Gastrocnemius medialis (tissue), 4 donors: ENCODE measurements at regions of chr4 and their contacts with region 1.

Region 1: DNA sequence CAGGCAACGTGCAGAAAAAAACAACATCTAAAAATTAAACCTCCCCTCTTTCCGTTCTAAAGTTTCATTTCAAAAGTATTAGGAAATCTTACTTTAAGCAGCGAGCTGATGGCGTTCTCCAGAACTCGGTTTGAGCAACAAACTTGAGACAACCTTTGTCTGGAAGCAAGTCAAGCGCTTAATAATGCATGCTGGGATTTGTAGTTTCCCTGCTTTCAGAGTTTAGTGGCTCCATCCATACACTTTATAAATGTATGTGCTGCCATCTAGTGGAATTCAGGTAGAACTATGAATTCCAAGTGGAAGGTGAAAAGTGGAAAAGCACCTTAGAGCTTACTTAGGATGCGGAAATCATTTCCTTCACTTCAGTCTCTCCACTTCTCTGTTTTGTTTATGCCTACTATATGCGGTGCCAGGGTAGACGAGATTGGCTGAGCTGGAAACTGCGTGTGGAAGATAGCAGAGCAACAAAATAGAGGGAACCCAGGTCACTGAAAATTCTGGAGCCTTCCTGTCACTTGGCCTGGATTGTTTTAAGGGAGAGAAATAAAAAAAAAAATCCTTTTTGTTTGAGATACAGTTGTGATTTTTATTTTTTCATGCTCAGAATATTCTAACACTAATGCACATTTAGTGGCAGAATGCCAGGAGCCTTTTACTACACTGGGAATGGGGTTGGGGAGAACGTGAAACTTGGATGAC is at the start of gene BDH2:
- DNase-seq: peak; percentile 54 to 66
- ATAC-seq: peak; percentile 100
- H3K4me3 ChIP-seq: peak within 1 kb of the TSS; percentile 55 to 62 (median 58)
- H3K27ac ChIP-seq: peak within 1 kb of the TSS; percentile 66 to 77 (median 73)
- H3K4me1 ChIP-seq: peaks cover 14 to 19% of the 10 kb centered on the region in 2 donors
- H3K27me3 ChIP-seq: no peaks in the 10 kb centered on the region
- CTCF ChIP-seq: peak; percentile 75 to 82 (median 79)
- POLR2A ChIP-seq: peak in 1 of 2 donors; percentile 28
- total RNA-seq, gene BDH2: 11.6 to 40.3 (median 18.5) TPM

Region 2: GRCh38 chr4:102324730-102325129 is 775.1 kb before region 1 on chr4:
- in situ Hi-C with region 1: no loop called
- intact Hi-C with region 1: no loop called
- DNase-seq: no peak
- ATAC-seq: no peak
- H3K4me3 ChIP-seq: no peak overlapping the region
- H3K27ac ChIP-seq: no peak overlapping the region
- H3K4me1 ChIP-seq: no peaks in the 10 kb centered on the region
- H3K27me3 ChIP-seq: no peaks in the 10 kb centered on the region
- CTCF ChIP-seq: no peak
- POLR2A ChIP-seq: no peak

Region 3: DNA sequence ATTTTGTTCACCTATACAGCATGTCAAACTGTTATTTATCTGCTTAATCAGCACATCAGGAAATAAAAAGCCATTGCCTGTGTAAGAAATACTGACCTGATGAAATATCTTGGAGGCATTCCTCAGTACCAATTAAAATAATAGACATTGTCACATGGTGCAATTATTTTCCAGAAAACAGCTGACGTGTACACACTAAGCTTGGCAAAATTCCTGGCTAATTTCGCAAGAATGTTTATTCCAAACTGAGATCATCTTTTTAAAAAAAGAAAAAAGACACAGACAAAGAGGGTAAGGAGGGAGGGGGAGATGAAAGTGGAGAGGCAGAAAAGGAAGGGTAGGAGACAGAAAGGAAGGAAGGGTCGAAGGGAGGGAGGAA is 660.6 kb before region 1 on chr4:
- in situ Hi-C with region 1: loop called in 2 of 4 experiments (anchors 10 kb)
- intact Hi-C with region 1: no loop called
- DNase-seq: peak in 1 of 2 donors; percentile 23
- ATAC-seq: peak; percentile 89 to 97
- H3K4me3 ChIP-seq: peak overlapping the region in 1 of 4 donors; percentile 18
- H3K27ac ChIP-seq: peak overlapping the region; percentile 58 to 70 (median 66)
- H3K4me1 ChIP-seq: peaks cover 15 to 18% of the 10 kb centered on the region in 2 donors
- H3K27me3 ChIP-seq: no peaks in the 10 kb centered on the region
- CTCF ChIP-seq: no peak
- POLR2A ChIP-seq: no peak

Region 4: GRCh38 chr4:102500696-102501446 is 599.0 kb before region 1 on chr4 and contains the start of gene NFKB1:
- in situ Hi-C with region 1: no loop called
- intact Hi-C with region 1: loop called (anchors 5 kb)
- DNase-seq: peak; percentile 37 to 66
- ATAC-seq: peak; percentile 56 to 66
- H3K4me3 ChIP-seq: peak within 1 kb of the TSS; percentile 71 to 98 (median 88)
- H3K27ac ChIP-seq: peak within 1 kb of the TSS; percentile 97 to 99 (median 98)
- H3K4me1 ChIP-seq: peaks cover 37 to 43% of the 10 kb centered on the region in 2 donors
- H3K27me3 ChIP-seq: no peaks in the 10 kb centered on the region
- CTCF ChIP-seq: no peak
- POLR2A ChIP-seq: peak in 1 of 2 donors; percentile 50
- total RNA-seq, gene NFKB1: 20.0 to 27.2 (median 22.7) TPM

Region 5: DNA sequence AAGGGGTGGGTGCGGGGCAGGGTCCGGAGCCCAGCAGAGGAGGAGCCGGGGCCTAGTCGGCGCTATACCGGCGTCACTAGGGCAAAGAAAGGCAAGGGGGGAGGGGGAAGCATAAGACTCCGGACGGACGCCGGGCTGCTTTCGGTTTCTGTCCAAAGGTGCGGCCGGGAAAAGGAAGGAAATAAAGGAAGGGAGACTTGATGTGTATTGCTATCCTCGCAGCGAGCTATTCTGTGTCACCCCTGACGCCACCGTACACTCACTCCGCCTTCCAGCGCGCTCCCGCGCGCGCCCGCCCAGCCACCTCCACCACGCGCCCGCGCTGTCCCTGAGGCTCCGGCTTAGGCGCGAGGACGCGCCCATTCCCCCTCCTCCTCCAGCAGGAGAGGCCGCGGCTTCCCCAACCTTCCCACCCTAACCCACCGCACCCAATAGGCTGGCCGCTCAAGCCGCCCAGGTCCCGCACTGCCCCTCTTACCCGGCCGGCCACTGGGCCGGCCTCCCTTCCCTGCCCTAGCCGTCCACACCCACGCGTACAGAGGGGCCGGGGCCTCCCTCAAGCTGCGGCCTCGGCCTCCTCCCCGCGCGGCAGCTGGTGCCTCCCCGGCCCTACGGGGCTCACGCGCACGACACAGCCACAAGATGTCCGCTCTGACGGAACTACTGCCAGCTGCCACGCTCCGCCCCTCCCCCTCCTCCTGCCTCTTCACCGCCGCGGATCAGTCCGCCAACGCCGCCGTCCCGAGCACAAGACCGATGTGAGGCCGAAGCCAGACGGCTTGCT is 272.8 kb before region 1 on chr4 and contains the start of gene UBE2D3:
- in situ Hi-C with region 1: no loop called
- intact Hi-C with region 1: loop called (anchors 5 kb)
- DNase-seq: peak; percentile 88 to 92
- ATAC-seq: peak; percentile 53 to 68
- H3K4me3 ChIP-seq: peak within 1 kb of the TSS; percentile 68 to 100 (median 94)
- H3K27ac ChIP-seq: peak within 1 kb of the TSS; percentile 94 to 100 (median 100)
- H3K4me1 ChIP-seq: peaks cover 31 to 40% of the 10 kb centered on the region in 2 donors
- H3K27me3 ChIP-seq: no peaks in the 10 kb centered on the region
- CTCF ChIP-seq: peak in 1 of 5 experiments; percentile 12
- POLR2A ChIP-seq: peak; percentile 81 to 87
- total RNA-seq, gene UBE2D3: 350 to 562 (median 392) TPM

Region 6: DNA sequence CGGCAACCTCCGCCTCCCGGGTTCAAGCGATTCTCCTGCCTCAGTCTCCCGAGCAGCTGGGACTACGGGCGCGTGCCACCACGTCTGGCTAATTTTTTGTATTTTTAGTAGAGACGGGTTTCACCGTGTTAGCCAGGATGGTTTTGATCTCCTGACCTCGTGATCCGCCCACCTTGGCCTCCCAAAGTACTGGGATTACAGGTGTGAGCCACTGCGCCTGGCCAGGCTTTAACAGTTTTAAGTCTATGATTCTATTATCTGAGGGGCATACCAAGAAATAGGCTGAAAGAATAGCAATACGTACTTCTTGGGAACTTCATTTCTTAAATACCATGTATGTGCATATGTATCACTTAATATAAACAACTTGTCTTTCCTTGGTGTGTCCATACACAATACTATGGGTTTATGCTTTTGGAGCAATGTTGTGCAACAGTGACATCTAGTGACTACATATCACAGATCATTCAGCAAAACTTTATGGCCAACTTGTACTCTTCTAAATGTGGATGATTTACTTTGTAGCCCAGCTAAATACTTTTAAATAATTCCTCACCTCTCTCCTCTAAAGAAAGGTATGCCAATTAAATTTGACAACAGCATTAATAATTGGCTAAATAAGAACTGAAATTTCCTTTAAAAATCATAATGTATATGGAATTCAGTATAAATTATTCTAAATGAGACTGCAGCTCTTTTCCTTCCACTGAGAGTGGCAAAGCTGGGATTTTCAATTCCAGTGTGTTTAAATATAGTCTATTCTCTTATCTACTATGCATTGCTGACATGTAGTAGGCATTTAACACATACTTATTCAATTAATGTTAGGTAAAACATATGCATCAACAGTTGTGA is 90.7 kb before region 1 on chr4:
- in situ Hi-C with region 1: no loop called
- intact Hi-C with region 1: loop called (anchors 2 kb)
- DNase-seq: no peak
- ATAC-seq: peak; percentile 89 to 91
- H3K4me3 ChIP-seq: no peak overlapping the region
- H3K27ac ChIP-seq: no peak overlapping the region
- H3K4me1 ChIP-seq: peaks cover 13 to 17% of the 10 kb centered on the region in 2 donors
- H3K27me3 ChIP-seq: no peaks in the 10 kb centered on the region
- CTCF ChIP-seq: peak in 4 of 5 experiments; percentile 66 to 81 (median 73)
- POLR2A ChIP-seq: no peak

Region 7: DNA sequence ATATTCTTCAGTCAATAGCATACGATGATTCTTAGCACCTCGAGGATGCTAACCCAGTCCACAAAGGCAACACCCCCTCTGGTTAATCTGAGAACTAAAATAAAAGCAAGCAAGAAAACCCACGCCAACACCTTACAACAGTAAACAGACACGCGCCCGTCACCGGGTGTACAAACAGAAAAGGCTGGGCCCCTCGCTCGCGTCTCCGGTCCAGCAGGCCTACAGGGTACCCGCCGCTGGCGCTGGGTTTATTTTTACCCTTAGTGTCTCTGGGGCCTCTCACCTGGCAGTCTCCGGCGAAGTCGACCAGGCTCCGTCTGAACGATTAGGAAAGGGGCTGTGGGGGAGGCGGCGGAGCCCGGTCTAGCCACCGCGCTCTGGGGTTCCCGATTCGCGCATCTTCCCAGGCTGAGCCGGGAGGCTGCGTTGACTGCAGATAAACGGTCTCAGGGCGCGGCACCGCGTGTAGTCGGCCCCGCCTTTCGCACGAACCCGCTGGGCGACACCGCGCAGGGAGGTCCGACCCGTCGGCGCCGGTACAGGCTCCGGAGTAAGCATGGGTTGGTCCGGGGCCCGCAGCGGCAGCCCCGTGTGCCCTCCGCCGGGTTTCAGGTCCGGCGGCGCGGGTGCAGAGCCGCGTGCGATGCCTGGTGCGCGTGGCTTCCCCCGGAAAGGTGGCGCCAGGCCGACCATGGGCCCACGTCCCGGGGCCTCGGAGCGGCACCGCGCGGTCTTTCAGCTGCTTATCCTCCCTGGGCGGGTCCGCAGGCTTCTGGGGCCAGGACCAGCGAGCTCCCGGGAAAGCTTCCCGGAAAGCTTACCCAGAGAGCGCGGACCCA is 23.7 kb before region 1 on chr4:
- in situ Hi-C with region 1: no loop called
- intact Hi-C with region 1: loop called (anchors 2 kb)
- DNase-seq: peak; percentile 27 to 50
- ATAC-seq: peak; percentile 77 to 82
- H3K4me3 ChIP-seq: peak overlapping the region; percentile 69 to 94 (median 78)
- H3K27ac ChIP-seq: peak overlapping the region; percentile 79 to 95 (median 82)
- H3K4me1 ChIP-seq: peaks cover 6 to 21% of the 10 kb centered on the region in 2 donors
- H3K27me3 ChIP-seq: no peaks in the 10 kb centered on the region
- CTCF ChIP-seq: no peak
- POLR2A ChIP-seq: peak; percentile 13 to 45